GM10248 (cell line): ENCODE measurements at regions of chr9 and their contacts with region 1.

Region 1: DNA sequence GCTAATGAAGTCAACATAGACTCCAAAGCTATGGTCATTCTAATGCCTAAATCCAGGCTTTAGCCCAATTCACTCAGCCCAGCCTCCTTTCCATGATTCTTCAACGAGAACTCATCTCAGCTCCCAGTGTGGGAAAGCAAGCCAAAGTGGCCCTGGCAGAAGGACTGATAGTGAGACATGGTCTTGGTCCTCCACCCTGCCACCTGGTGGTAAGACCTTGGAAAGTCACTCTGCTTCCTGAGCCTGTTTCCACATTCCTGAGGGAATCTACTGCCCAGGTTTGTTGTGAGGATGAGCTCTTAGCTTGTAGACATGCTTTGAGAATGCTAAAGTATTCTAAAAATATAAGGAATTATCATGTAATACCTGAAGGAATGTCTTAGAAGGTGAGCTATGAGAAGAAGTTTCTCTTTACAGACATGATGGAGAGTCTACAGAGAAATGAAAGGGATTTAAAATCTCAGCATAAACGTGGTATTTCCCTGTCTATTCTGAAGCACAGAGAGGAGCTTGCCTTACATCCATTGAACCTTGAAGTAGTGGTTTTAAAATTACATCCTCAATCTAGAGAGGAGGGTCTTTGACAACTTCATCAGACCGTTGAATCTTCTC is 173.5 kb downstream of the TRIM32 start:
- DNase-seq: peak; percentile 51
- CTCF ChIP-seq: peak; percentile 74

Region 2: DNA sequence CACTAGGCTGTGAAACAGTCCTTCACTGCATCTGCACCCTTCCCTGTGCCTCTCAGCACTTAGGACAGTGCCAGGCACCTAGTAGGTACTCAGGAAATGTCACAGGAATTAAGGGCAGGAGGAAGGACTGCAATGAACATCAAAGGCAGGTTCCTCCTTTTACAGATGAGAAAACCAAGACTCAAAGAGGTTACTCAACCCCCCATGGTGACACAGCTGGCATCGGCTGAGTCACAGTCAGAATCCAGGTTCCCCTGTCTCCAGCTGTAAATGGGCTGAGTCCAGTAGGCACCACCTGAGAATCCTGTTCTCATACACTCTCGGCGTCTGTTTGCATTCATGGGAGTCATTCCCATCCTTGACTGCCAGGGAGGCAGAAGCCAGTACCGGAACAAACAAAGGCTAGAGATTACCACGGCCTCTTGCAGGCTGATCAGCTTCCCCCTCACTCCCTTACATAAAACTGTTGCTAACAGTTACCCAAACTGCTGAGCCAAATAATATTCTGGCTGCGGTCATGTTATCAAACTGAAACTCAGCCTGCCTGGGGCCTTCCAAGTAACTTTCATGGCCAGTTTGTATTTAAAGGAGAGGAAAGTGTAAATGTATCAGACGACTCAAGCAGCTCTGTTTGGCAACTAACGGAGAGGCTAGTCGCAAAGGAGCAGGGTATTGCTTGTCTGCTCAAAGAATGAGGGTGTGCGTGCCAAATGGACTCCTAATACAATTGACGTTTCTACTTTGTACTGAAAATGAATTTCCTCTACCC is 505.3 kb before region 1 on chr9:
- CTCF ChIA-PET with region 1: no interaction called
- POLR2A ChIA-PET with region 1: no interaction called
- DNase-seq: no peak
- CTCF ChIP-seq: no peak

Region 3: DNA sequence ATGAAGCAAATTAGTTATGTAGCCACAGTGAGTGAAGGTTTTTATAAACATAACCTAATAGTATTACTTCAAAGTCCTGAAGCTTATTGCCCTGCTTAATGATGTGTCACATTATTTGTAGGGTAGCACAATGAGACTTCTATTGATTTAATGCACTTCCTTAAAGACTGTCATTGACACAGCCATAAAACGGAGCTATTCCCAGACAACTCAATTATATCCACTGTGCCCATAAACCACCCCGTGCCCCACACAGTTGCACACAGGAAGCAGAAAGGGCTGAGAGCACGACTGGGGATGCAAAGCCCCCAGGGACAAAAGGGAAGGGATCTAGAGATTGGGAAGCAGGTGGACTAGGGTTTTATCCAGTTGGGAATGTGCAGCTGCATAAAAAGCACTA is 136.5 kb before region 1 on chr9:
- CTCF ChIA-PET with region 1: interaction called, 19 read pairs
- POLR2A ChIA-PET with region 1: no interaction called
- DNase-seq: no peak
- CTCF ChIP-seq: no peak

Region 4: DNA sequence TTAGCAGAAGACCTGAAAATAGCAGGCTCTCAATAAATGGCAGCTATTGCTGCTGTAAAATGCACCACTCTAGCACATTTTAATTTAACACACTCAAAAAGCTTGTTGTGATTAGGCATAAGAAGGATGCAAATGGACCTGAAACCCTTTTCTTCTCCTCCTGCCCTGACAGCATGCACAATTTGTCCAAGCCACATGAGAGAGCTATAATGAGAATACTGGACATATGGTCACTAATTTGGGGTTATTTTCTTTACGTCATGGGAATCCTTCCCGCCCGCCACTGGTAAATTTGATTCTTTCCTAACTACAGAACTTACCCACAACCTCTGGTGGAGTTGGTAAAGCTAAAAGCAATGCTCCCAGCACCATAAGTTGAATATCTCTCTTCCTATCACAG is 111.4 kb before region 1 on chr9:
- CTCF ChIA-PET with region 1: interaction called, 37 read pairs
- POLR2A ChIA-PET with region 1: no interaction called
- DNase-seq: no peak
- CTCF ChIP-seq: no peak

Region 5: DNA sequence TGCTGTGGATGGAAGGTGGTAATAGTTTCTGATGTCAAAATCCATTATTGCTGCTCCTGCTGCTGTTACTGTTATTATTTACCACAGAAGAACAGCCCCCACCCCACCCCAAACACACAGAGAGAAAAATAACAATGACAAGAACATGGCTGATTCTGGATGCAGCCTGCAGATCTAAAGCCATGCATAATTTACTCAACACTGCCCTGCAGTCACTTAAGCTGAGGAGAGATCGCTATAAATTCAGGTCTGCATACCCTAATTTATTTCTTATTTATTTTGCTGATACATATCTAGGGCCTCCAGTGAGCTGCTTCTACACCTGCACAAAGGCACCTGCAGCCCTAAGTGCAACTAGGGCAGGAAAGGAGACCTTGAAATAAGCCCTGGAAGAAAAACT is 41.5 kb before region 1 on chr9:
- CTCF ChIA-PET with region 1: interaction called, 16 read pairs
- POLR2A ChIA-PET with region 1: no interaction called
- DNase-seq: no peak
- CTCF ChIP-seq: no peak

Region 6: DNA sequence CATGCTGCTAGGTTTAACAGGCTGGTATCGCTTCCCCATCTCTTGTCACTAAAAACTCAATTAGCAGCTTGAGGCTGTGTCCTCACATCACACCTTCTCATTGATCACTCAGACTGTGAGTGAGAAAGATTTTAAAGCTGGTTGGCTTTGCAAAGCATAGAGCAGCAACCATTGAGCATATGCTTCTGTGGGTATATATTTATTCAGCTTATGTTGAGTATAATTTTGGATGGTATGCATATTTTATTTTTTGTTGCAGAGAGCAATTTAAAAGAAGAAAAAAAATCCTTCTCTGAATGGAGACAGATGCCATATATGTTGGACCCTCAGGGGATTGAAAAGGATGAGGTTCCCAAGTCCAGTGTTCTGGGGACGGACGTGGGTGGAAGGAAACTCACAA is 10.9 kb before region 1 on chr9:
- CTCF ChIA-PET with region 1: interaction called, 87 read pairs
- POLR2A ChIA-PET with region 1: no interaction called
- DNase-seq: no peak
- CTCF ChIP-seq: no peak

Region 7: GRCh38 chr9:116959809-116960208 is 99.2 kb after region 1 on chr9:
- CTCF ChIA-PET with region 1: no interaction called
- POLR2A ChIA-PET with region 1: no interaction called
- DNase-seq: no peak
- CTCF ChIP-seq: no peak